Upper lobe of right lung (tissue), 1 donor: ENCODE measurements at regions of chr5 and their contacts with region 1.

Region 1: DNA sequence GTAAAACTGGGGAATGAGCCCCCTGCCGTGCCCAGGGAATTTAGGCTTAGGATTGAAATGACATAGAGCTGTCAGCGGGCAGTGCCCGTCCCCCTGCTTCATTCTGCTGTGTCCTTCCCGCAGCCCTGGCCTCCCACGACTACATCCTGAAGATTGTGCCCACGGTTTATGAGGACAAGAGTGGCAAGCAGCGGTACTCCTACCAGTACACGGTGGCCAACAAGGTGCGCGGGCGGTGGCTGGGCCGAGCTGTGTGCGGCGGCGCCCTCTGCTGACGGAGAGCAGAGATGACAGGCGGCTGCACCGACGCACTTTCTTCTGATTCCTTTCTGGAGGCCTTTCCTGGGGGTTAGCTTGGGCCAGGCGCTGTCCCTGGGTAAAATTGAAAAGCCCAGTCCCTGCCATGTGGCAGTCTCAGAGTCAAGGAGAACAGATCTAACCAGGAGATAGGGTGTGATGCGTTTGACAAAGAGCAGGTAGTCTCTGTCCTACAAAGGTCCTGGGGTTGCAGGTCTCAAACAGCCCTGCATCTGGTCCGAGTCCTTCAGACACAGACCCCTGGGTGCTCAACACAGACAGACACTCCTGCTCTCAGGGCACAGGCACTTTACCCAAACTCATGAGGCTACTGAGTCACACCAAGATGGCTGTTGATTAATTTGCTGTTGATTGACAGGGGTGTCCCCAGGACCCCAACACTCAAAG is 26.8 kb upstream of the RPL26L1 start:
- DNase-seq: peak; percentile 91
- ATAC-seq: peak; percentile 96
- H3K4me3 ChIP-seq: no peak overlapping the region
- H3K27ac ChIP-seq: peak overlapping the region; percentile 74
- H3K4me1 ChIP-seq: peaks cover 20% of the 10 kb centered on the region
- H3K27me3 ChIP-seq: no peaks in the 10 kb centered on the region
- CTCF ChIP-seq: peak; percentile 94

Region 2: DNA sequence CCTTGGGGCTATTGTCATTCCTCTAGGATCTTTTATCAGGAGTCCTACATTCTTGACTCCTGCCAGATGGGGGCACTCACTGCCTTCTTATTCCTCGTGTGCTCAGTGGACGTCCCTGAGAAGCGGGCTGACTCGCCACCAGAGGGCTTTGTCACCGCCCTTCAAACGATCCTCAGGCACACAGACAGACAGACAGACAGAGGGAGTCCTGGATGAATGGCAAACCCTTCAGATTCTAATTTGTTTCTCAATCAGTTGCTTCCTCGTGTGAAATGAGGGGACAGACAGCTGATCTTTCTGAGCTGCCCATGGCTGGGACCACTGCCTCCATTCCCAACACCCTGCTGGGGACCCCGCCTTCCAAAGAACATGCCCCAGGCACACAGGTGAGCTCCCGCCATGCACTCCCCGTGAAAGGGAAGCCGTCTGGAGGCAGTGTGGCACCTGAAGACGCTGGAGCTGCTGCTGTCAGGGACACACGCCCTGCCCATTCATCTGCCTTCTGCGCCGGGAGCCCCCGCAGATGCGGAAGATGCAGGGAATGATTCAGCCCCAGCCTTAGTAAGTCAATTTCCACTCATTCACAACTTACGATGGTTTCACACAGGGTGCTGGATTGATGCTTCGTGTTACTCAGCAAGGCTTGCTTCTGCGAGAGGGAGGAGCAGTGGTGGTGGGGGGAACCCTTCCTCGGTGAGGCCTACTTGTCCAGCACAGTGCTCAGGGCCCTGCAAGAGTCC is 453.3 kb before region 1 on chr5:
- intact Hi-C with region 1: loop called (anchors 10 kb)
- DNase-seq: peak; percentile 85
- ATAC-seq: peak; percentile 99
- H3K4me3 ChIP-seq: no peak overlapping the region
- H3K27ac ChIP-seq: no peak overlapping the region
- H3K4me1 ChIP-seq: no peaks in the 10 kb centered on the region
- H3K27me3 ChIP-seq: no peaks in the 10 kb centered on the region
- CTCF ChIP-seq: peak; percentile 78

Region 3: DNA sequence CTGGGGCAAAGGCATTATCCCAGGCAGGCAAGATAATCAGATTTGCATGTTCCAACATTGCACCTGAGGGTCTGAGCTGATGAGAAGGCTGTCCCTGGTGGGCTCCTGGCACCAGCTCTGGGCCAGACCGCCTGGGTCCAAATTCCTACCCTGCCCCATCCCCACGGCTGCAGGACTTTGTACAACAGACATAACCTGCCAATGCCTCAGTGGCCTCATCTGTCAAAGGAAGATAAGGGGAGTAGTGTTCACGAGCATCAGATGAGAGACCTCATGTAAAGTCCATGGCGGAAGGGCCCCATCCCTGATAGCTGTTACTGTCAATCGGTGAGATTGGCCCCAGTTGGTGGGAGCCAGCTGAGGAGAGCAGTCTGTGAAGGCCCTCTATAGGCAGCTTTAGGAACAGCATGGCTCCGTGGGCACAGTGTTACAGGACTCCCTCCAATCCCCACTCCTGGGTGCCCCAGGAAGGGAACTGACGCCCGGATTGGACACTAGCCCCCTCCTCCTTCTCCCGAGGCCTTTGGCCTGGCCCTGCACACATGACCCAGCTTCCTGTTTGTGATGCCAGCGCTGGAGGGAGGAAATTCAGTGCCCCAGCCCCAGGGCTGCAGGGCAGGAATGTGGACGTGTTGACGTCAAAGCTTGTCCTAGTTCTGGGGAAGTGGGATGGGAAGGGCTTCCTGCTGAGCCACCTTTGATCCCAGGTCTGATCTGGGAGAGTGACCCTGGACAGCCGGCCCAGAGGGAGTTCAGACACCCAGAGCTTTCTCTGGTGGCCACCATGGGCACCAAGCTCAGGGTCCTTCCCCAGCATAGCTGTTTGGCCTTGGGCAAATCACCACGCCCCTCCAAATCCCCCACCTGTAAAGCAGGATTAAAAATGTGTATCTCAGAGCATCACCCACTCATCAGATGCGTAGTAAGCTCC is 217.7 kb before region 1 on chr5:
- intact Hi-C with region 1: loop called (anchors 5 kb)
- DNase-seq: peak; percentile 90
- ATAC-seq: peak; percentile 89
- H3K4me3 ChIP-seq: no peak overlapping the region
- H3K27ac ChIP-seq: peak overlapping the region; percentile 81
- H3K4me1 ChIP-seq: peaks cover 41% of the 10 kb centered on the region
- H3K27me3 ChIP-seq: no peaks in the 10 kb centered on the region
- CTCF ChIP-seq: peak; percentile 89